GM10248 (cell line): ENCODE measurements at regions of chr19 and their contacts with region 1.

Region 1: GRCh38 chr19:41563854-41564514 is 12.0 kb upstream of the CEACAM21 start:
- DNase-seq: peak; percentile 28
- CTCF ChIP-seq: no peak

Region 2: GRCh38 chr19:41395355-41395754 is 168.6 kb before region 1 on chr19:
- CTCF ChIA-PET with region 1: no interaction called
- POLR2A ChIA-PET with region 1: no interaction called
- DNase-seq: no peak
- CTCF ChIP-seq: no peak

Region 3: GRCh38 chr19:41420101-41420880 is 143.7 kb before region 1 on chr19:
- CTCF ChIA-PET with region 1: no interaction called
- POLR2A ChIA-PET with region 1: no interaction called
- DNase-seq: no peak
- CTCF ChIP-seq: no peak

Region 4: GRCh38 chr19:41510484-41510883 is 53.5 kb before region 1 on chr19:
- CTCF ChIA-PET with region 1: no interaction called
- POLR2A ChIA-PET with region 1: no interaction called
- DNase-seq: no peak
- CTCF ChIP-seq: no peak

Region 5: DNA sequence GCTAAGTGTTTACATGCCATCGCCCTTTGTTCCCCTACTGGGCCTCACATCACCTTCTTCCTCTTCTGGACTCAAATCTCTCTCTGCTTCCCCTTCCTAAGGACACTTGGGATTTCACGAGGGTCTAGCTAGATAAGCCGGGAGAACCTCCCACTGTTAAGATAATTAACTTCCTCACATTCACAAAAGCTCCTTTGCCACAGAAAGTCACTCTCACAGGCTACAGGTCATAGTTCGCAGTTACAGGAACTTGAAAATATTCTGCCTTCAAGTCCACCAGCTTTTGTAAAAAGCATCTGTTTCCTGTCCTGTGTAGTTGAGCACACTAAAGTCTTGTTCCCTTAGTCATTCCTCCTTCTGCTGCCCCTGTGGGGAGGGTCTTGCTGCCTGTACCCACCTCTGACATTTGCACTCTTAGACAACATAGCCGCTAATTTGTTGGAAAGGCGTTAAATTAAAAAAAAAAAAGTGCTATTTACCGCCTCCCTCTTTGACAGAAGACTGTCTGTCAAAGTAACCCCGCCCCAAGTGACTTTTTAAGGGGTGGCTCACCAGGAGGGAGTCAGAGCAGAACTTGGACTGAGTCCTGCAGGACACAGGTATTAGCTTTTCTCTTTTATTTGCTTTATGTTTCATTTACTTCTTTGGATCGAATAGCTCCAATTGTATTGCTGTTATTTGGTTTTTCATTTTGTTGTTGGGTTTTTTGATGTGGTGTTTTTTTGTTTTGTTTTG is 14.9 kb before region 1 on chr19:
- CTCF ChIA-PET with region 1: interaction called, 64 read pairs
- POLR2A ChIA-PET with region 1: interaction called, 3 read pairs
- DNase-seq: peak; percentile 65
- CTCF ChIP-seq: no peak

Region 6: GRCh38 chr19:41575998-41576397 is 12.0 kb after region 1 on chr19 and contains the start of gene CEACAM21:
- CTCF ChIA-PET with region 1: interaction called, 64 read pairs
- POLR2A ChIA-PET with region 1: no interaction called
- DNase-seq: peak; percentile 83
- CTCF ChIP-seq: no peak